AG04449 (cell line): ENCODE measurements at regions of chr11 and their contacts with region 1.

Region 1: GRCh38 chr11:44842220-44842619 is 108.5 kb downstream of the TP53I11 start:
- DNase-seq: peak; percentile 89
- H3K4me3 ChIP-seq: no peak overlapping the region
- CTCF ChIP-seq: no peak

Region 2: DNA sequence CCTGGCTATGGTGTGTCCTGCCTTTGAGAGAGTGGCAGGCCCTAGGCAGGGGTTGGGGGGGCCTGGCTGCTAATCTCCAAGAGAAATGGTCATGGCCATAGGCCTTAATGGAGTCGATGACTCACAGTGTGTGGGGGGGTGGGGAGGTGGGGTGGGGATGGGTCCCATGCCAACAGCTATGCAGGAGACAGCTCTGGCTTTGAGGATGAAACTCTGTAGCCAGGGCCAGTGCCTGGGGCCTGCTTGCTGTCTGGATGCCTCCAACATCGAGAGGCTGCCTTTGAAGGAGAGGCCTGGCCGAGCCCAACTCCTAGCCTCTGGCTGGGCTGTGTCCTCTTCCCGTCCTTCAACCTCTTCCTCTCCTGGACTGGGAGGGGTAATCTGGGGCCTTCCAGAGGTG is 139.3 kb before region 1 on chr11:
- CTCF ChIA-PET with region 1: no interaction called
- POLR2A ChIA-PET with region 1: no interaction called
- DNase-seq: no peak
- H3K4me3 ChIP-seq: no peak overlapping the region
- CTCF ChIP-seq: no peak

Region 3: DNA sequence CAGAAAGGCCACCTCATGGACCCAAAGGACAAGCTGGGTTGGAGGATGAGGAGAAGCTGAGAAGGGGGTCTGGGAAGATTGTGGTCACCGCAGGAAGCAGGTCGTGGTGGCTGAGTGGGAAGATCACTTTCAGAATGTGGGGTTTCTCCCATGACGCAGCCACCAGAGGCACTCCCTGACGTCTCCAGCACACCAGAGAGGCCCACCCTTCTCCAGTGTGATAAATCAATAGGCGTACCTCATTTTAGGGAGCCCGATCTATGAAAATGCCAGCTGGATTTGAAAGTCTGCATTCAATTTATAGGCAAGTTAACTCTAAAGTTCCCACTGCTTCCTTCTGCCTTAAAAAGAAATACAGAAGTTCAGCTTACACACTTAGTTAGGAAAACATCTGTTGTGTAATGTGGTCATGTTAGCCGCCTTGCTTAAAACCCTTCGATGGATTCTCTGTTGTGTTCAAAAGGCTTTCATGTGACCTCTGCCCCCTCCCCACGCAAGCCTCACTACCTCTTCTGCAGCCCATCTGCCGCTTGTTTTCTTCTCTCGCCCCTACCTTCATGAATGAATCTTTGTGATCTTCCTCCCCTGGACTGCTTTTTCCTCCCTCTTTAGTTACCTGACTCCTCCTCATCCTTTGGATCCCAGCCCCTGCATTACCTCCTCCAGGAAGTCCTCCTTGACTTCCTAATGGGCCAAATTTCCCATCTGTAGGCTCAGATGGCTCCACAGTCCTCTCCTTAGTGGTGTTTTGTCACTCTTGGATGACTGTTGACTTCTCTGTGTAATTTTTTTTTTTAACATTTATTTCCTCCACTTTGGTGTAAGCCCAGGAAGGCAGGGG is 104.8 kb before region 1 on chr11:
- CTCF ChIA-PET with region 1: no interaction called
- POLR2A ChIA-PET with region 1: no interaction called
- DNase-seq: no peak
- H3K4me3 ChIP-seq: no peak overlapping the region
- CTCF ChIP-seq: no peak

Region 4: GRCh38 chr11:44861849-44862749 is 19.9 kb after region 1 on chr11:
- CTCF ChIA-PET with region 1: interaction called, 7 read pairs
- POLR2A ChIA-PET with region 1: interaction called, 21 read pairs
- DNase-seq: peak; percentile 97
- H3K4me3 ChIP-seq: no peak overlapping the region
- CTCF ChIP-seq: no peak

Region 5: DNA sequence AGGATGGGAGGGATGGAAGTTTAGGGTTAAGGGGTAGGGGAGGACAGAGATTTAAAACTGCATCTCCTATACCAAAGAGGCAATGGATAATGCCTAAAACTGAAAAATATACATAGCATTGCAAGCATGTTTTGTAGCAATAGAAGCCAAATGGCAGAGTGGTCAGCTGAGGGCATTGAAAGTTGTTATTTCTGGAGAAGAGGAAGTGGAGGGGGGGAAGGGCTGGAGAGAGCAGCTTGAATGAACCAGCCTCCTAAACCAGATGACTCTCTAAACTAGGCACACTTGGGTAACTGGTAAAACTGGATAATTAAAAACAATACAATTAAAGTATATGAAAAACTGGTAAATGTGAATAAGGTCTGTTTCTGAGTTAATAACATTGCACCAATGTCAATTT is 178.8 kb after region 1 on chr11:
- CTCF ChIA-PET with region 1: no interaction called
- POLR2A ChIA-PET with region 1: no interaction called
- DNase-seq: no peak
- H3K4me3 ChIP-seq: no peak overlapping the region
- CTCF ChIP-seq: no peak

Region 6: DNA sequence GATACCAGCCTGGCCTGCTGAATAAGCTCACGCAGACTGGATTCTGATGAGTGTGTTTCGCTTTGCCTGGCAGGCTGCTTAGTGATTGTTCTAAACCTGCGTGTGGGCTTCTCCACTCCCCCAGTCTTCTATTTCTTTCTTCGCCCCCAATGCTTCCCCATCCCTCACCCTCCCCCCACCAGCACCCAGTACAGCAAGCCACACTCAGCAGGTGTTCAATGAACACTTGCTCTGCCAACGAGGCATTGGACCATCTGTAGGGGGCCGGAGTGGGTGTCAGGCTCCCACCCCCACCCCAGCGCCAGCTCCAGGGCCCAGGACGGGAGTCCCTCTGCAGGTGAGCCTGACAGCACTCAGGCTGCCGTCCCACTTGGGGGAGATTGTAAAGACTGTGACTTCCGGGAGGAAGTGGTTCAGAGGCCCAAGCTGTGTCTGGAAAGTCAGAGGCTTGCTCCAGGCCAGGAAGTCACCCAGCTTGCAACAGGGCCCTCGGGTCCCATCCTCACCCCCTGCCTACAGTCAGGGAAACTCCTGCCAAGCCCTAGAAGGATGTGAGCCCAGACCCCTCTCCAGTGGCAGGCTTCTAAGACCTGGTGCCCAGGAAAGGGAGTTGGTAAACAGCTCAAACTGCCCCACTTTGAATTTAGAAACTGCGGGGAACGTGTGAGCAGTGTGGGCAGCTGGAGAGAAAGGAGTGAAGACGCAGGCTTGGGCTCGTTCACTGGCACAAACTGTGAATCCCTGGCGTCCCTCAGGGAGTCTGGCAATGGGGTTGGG is 237.9 kb after region 1 on chr11:
- CTCF ChIA-PET with region 1: no interaction called
- POLR2A ChIA-PET with region 1: no interaction called
- DNase-seq: no peak
- H3K4me3 ChIP-seq: no peak overlapping the region
- CTCF ChIP-seq: no peak